Ascending aorta (tissue), 2 donors: ENCODE measurements at regions of chr10 and their contacts with region 1.

Region 1: GRCh38 chr10:100229819-100230422 is 525 bp upstream of the CHUK start:
- DNase-seq: no peak
- H3K4me3 ChIP-seq: peak overlapping the region; percentile 83 to 87
- H3K27ac ChIP-seq: peak overlapping the region; percentile 64 to 79
- H3K4me1 ChIP-seq: peaks cover 0 to 11% of the 10 kb centered on the region in 2 donors
- H3K27me3 ChIP-seq: no peaks in the 10 kb centered on the region
- CTCF ChIP-seq: no peak

Region 2: DNA sequence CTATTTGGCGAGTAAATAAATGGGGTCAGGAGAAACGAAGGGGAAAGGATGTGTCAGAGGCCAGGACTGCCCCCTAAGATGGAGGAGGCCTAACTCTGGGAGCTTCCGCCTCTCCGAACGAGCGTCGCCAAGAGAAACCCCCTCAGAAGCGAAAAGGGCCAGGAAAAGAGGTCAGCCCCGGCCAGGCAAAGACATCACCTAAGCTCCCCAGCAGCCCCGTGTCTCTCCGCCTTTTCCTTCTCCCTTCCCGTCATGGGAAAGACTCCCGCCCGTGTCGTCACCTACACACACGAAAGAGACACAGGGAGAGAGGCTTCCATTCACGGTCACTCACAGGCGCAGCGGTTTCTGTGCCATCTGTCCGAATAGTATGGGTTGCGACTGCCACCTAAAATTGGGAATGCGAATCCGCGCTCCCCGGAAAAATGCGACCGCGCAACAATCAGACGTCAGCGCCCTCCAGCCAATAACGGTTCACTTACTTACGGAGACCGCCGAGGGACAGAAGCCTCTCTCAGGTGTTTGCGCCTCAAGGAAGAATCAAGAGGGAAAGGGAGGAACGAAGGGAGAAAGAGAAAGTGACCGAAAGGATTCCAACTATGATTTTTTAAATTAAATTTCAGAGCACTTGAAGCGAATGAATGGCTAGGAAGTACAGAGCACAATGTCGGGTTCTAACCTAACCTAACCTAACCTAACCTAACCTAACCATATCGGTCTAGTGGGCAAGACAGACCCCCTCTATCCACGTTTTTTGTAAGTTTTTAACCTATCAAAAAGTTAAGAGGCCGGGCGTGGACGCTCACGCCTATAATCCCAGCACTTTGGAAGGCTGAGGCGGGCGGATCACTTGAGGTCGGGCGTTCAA is 37.5 kb after region 1 on chr10 and contains the start of gene CWF19L1:
- intact Hi-C with region 1: loop called (anchors 1 kb)
- DNase-seq: peak; percentile 47 to 91
- H3K4me3 ChIP-seq: peak within 1 kb of the TSS; percentile 73 to 89
- H3K27ac ChIP-seq: peak within 1 kb of the TSS; percentile 70 to 84
- H3K4me1 ChIP-seq: peaks cover 4 to 11% of the 10 kb centered on the region in 2 donors
- H3K27me3 ChIP-seq: no peaks in the 10 kb centered on the region
- CTCF ChIP-seq: no peak
- total RNA-seq, gene CWF19L1: 14.3 TPM

Region 3: GRCh38 chr10:100297242-100297641 is 67.3 kb after region 1 on chr10:
- intact Hi-C with region 1: no loop called
- DNase-seq: no peak
- H3K4me3 ChIP-seq: no peak overlapping the region
- H3K27ac ChIP-seq: no peak overlapping the region
- H3K4me1 ChIP-seq: no peaks in the 10 kb centered on the region
- H3K27me3 ChIP-seq: no peaks in the 10 kb centered on the region
- CTCF ChIP-seq: no peak

Region 4: DNA sequence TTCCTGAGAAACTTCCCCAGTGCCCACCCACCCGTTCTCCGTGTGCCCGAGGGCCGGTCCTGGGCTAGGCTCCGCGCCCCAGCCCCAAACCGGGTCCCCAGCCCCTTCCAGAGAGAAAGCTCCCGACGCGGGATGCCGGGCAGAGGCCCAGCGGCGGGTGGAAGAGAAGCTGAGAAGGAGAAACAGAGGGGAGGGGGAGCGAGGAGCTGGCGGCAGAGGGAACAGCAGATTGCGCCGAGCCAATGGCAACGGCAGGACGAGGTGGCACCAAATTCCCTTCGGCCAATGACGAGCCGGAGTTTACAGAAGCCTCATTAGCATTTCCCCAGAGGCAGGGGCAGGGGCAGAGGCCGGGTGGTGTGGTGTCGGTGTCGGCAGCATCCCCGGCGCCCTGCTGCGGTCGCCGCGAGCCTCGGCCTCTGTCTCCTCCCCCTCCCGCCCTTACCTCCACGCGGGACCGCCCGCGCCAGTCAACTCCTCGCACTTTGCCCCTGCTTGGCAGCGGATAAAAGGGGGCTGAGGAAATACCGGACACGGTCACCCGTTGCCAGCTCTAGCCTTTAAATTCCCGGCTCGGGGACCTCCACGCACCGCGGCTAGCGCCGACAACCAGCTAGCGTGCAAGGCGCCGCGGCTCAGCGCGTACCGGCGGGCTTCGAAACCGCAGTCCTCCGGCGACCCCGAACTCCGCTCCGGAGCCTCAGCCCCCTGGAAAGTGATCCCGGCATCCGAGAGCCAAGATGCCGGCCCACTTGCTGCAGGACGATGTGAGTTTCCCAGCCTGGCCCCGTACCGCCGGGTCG is 117.0 kb after region 1 on chr10 and contains the start of gene SCD:
- intact Hi-C with region 1: loop called (anchors 1 kb)
- DNase-seq: peak; percentile 75 to 89
- H3K4me3 ChIP-seq: peak within 1 kb of the TSS; percentile 74 to 84
- H3K27ac ChIP-seq: peak within 1 kb of the TSS; percentile 54 to 74
- H3K4me1 ChIP-seq: peaks cover 0 to 4% of the 10 kb centered on the region in 2 donors
- H3K27me3 ChIP-seq: no peaks in the 10 kb centered on the region
- CTCF ChIP-seq: no peak
- total RNA-seq, gene SCD: 2.9 TPM